Activated CD4-positive, alpha-beta T cell treated with anti-CD3 and anti-CD28 coated beads, Interleukin-2, amount 10 ng/mL, durations not matched to agents 7 days and 5 days (primary cell): ENCODE measurements at regions of chrX and their contacts with region 1.

Region 1: GRCh38 chrX:154515878-154516655 is at the start of gene FAM3A:
- DNase-seq: peak; percentile 93
- H3K4me3 Mint-ChIP-seq: peak within 1 kb of the TSS; percentile 80
- H3K27ac Mint-ChIP-seq: peak within 1 kb of the TSS; percentile 94
- H3K4me1 Mint-ChIP-seq: peaks cover 31% of the 10 kb centered on the region
- H3K27me3 Mint-ChIP-seq: no peaks in the 10 kb centered on the region
- total RNA-seq, gene FAM3A: 34.4 to 38.6 TPM

Region 2: DNA sequence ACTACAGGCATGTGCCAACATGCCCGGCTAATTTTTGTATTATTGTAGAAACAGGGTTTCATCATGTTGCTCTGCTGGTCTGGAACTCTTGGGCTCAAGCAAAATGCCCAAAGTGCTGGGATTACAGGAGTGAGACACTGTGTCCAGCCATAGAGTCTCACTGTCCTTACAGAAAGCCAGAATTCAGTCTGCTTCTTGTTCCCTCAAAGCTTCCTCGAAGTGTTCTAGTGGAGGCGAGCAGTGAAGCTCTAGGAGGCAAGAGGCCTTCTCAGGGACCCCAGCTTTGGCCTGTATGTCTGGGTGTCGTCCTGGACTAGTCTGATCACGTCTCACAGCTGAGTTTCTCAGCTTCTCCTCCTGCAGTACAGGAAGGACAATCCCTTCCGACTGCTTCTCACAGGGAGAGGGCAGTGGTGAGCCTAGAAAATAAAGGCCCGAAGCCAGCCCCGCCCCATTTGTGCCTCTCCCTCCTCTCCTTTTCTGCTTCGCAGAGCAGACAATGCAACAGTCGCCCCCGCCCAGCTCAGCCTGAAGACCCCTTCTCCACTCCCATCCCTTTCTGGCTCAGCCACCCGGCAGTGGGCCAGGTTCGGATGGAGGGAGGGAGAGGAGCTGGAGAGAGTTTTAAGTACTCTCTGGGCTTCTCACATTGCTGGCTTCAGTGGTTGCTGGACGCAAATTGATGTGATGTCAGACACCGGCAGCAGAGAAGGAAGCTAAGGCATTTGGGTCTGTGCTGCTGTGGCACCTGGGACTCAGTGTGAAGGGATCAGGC is 11.0 kb after region 1 on chrX:
- CTCF ChIA-PET with region 1: interaction called, 10 read pairs
- POLR2A ChIA-PET with region 1: no interaction called
- DNase-seq: peak; percentile 67
- H3K4me3 Mint-ChIP-seq: no peak overlapping the region
- H3K27ac Mint-ChIP-seq: peak overlapping the region; percentile 83
- H3K4me1 Mint-ChIP-seq: peaks cover 24% of the 10 kb centered on the region
- H3K27me3 Mint-ChIP-seq: no peaks in the 10 kb centered on the region